IMR-90 (cell line): ENCODE measurements at regions of chr22 and their contacts with region 1.

Region 1: DNA sequence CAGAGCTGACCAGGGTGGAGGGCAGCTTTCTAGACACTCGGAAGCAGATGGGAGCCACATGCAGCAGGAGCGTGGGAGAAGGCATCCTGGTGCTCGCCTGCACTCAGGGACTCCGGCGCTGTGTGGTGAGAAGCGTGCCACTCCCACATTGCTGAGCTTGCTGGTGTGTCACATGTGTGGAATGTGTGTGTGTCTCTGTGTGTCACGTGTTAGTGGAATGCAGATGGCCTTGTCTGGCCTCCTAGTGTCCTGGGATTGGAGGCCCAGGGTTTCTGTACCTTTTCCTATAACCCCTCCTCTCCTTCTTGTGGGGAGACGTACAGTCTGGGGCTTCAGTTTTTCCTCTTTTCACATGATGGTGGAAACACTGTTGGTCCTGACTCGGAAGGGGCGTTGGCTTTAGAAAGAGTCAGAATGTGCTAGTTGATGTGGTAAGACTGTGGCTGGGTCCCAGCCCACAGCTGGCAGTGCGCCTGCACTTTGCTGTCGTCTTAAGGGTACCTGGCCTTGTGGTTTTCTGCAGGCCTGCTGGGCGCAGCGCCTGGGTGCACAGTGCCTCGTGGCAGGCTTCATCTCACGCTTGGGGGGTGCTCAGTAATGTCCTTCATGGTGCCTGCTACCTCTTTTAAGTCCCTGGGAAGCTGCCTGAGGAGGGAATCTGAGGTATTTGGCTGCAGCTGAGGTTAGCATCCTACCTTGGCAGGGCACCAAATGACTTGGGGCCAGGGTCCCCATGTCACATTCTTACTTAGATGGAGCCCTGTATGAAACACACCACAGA is 61.8 kb downstream of the MED15 start:
- DNase-seq: peak; percentile 99
- ATAC-seq: peak; percentile 78
- H3K4me3 ChIP-seq: no peak overlapping the region
- H3K27ac ChIP-seq: peak overlapping the region; percentile 76
- H3K4me1 ChIP-seq: peaks cover 50% of the 10 kb centered on the region
- H3K27me3 ChIP-seq: no peaks in the 10 kb centered on the region
- CTCF ChIP-seq: no peak
- POLR2A ChIP-seq: no peak
- RAD21 ChIP-seq: peak; percentile 15; the same call in 1 of the 2 replicates

Region 2: DNA sequence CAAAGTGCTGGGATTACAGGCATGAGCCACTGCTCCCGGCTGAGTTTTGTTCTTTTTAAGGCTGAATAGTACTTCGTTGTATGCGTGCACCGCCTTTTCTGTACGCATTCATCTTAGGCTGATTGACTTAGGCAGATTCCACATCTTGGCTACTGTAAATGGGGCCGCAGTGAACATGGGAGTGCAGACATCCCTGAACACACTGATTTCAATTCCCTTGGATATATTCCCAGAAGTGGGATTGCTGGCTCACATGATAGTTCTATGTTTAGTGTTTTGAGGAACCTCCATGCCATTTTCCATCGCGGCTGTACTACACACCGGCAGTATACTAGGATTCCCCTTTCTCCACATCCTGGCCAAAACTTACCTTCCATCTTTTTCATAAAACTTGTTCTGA is 185.6 kb before region 1 on chr22:
- CTCF ChIA-PET with region 1: no interaction called
- POLR2A ChIA-PET with region 1: no interaction called
- dilution Hi-C with region 1: no loop called
- in situ Hi-C with region 1: no loop called
- intact Hi-C with region 1: no loop called
- DNase-seq: no peak
- ATAC-seq: no peak
- H3K4me3 ChIP-seq: no peak overlapping the region
- H3K27ac ChIP-seq: no peak overlapping the region
- H3K4me1 ChIP-seq: no peaks in the 10 kb centered on the region
- H3K27me3 ChIP-seq: peaks cover 12% of the 10 kb centered on the region
- CTCF ChIP-seq: no peak
- POLR2A ChIP-seq: no peak
- RAD21 ChIP-seq: no peak

Region 3: GRCh38 chr22:20418211-20418788 is 150.9 kb before region 1 on chr22:
- CTCF ChIA-PET with region 1: no interaction called
- POLR2A ChIA-PET with region 1: no interaction called
- dilution Hi-C with region 1: no loop called
- in situ Hi-C with region 1: no loop called
- intact Hi-C with region 1: loop called (anchors 1 kb)
- DNase-seq: peak; percentile 80
- ATAC-seq: peak; percentile 80
- H3K4me3 ChIP-seq: peak overlapping the region; percentile 31; the same call in 1 of the 2 replicates
- H3K27ac ChIP-seq: peak overlapping the region; percentile 22; the same call in 1 of the 2 replicates
- H3K4me1 ChIP-seq: peaks cover 11% of the 10 kb centered on the region; the same call in 1 of the 2 replicates
- H3K27me3 ChIP-seq: no peaks in the 10 kb centered on the region
- CTCF ChIP-seq: peak; percentile 95
- POLR2A ChIP-seq: 0 out of 2 replicates have a peak, but pooled peaks have one; percentile 51
- RAD21 ChIP-seq: peak; percentile 94

Region 4: DNA sequence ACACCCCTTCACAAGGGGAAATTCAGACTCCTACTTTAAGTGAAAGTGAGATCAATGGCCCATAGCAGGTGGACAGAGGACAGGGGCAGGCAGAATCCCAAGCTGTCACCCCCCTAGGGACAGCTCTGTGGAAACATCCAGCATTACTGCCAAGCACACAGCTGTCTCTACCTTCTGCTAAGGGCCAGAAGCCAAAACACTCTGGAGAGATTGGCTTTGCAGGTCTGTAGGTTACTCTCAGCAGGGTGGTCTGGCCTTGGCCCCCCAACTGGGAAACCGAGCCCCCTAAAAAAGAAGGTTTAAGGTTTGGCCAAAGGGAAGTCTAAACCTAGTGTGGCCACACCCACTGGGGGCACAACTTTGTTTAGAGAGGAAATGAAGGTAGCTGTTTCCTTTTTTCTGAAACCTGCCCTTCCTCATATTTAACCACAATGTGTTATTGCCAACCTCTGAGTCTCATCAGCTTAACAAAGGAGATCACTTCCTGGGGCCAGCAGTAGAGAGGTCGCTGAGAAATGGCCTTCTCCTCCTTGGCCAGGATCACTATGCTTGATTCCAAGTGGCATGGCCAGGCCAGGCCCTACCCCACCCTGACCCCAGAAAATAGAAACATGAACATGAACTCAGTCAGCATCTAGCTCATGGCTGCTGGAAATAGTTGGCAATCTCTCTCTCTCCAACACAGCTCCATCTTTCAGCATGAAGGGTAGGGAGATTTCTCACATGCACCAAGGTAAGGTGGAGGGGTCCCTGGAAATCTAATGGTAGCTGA is 105.7 kb before region 1 on chr22:
- CTCF ChIA-PET with region 1: no interaction called
- POLR2A ChIA-PET with region 1: no interaction called
- dilution Hi-C with region 1: no loop called
- in situ Hi-C with region 1: no loop called
- intact Hi-C with region 1: no loop called
- DNase-seq: no peak
- ATAC-seq: no peak
- H3K4me3 ChIP-seq: no peak overlapping the region
- H3K27ac ChIP-seq: no peak overlapping the region
- H3K4me1 ChIP-seq: peaks cover 5% of the 10 kb centered on the region; the same call in 1 of the 2 replicates
- H3K27me3 ChIP-seq: no peaks in the 10 kb centered on the region
- CTCF ChIP-seq: no peak
- POLR2A ChIP-seq: no peak
- RAD21 ChIP-seq: no peak

Region 5: GRCh38 chr22:20507253-20508066 is 61.7 kb before region 1 on chr22 and contains the start of gene MED15:
- CTCF ChIA-PET with region 1: interaction called, 7 read pairs
- POLR2A ChIA-PET with region 1: interaction called, 5 read pairs
- dilution Hi-C with region 1: no loop called
- in situ Hi-C with region 1: no loop called
- intact Hi-C with region 1: loop called (anchors 5 kb)
- DNase-seq: peak; percentile 89
- ATAC-seq: peak; percentile 73
- H3K4me3 ChIP-seq: peak within 1 kb of the TSS; percentile 78
- H3K27ac ChIP-seq: peak within 1 kb of the TSS; percentile 97
- H3K4me1 ChIP-seq: peaks cover 18% of the 10 kb centered on the region
- H3K27me3 ChIP-seq: no peaks in the 10 kb centered on the region
- CTCF ChIP-seq: no peak
- POLR2A ChIP-seq: peak; percentile 95
- RAD21 ChIP-seq: 0 out of 2 replicates have a peak, but pooled peaks have one; percentile 26
- total RNA-seq, gene MED15: 19.0 and 22.8 TPM in 2 replicates

Region 6: DNA sequence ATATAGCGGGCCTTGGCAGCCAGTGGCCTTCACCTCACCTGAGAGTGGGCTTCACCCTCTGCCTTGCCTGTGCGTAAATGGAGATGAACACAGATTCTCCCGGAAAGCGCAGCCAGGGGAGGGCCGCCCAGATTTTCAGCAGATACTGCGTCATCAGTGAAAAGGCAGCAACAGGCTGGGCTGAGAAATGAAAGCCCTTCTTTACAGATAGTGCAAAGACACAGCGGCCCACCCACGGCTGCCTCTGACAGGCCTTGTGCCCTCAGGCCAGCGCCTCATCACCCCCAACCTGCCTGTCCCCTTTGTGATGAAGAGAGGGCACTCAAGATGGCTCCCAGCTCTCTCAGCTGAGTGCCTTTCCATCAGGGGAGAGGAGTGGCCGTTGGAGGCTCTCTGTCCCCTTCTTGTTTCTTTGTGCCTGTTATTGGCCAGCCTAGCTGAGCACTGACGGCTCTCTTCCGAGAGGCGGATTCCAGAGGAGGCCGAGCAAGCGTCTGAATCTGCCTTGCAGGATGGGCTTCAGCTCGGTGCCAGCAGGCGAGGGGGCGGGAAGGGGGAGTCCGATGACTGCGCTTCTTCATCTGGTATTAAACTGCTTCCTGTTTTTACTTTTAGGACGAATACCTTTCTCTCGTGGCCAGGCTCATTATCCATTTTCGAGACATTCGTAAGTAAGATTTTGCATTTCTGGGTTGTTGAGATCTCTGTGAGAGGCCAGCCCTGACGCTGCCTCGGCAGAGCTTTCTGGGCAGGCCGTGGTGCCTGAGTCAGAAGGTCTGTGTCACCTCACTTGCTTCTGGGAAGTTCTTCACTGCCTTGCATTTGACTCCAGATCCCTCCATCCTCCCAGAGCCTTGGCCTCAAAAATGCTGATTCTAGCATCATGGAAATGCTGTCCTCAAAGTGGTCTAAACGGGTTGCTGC is 18.1 kb before region 1 on chr22:
- CTCF ChIA-PET with region 1: interaction called, 16 read pairs
- POLR2A ChIA-PET with region 1: no interaction called
- dilution Hi-C with region 1: no loop called
- in situ Hi-C with region 1: no loop called
- intact Hi-C with region 1: no loop called
- DNase-seq: peak; percentile 78
- ATAC-seq: peak; percentile 33
- H3K4me3 ChIP-seq: no peak overlapping the region
- H3K27ac ChIP-seq: peak overlapping the region; percentile 85
- H3K4me1 ChIP-seq: peaks cover 51% of the 10 kb centered on the region
- H3K27me3 ChIP-seq: no peaks in the 10 kb centered on the region
- CTCF ChIP-seq: no peak
- POLR2A ChIP-seq: no peak
- RAD21 ChIP-seq: no peak

Region 7: DNA sequence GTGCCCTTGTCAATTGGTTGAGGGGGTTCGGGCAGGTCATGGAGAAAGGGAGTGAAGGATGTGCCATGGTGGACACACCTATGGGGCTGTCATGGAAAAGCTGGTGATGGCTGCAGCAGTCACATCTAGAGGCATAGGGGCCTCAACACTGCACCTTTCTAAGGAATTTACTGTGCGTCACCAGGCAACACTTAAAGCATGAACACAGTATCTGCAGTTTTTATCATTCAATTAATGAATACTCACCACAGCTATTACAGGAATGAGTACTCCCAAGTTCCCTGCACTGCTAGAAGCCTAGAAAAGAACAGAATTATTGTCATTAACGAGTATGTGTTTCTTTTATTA is 223.7 kb after region 1 on chr22:
- CTCF ChIA-PET with region 1: no interaction called
- POLR2A ChIA-PET with region 1: no interaction called
- dilution Hi-C with region 1: no loop called
- in situ Hi-C with region 1: no loop called
- intact Hi-C with region 1: no loop called
- DNase-seq: no peak
- ATAC-seq: no peak
- H3K4me3 ChIP-seq: no peak overlapping the region
- H3K27ac ChIP-seq: no peak overlapping the region
- H3K4me1 ChIP-seq: 0 out of 2 replicates have a peak, but pooled peaks cover 2% of the 10 kb centered on the region
- H3K27me3 ChIP-seq: no peaks in the 10 kb centered on the region
- CTCF ChIP-seq: no peak
- POLR2A ChIP-seq: no peak
- RAD21 ChIP-seq: no peak

Region 8: DNA sequence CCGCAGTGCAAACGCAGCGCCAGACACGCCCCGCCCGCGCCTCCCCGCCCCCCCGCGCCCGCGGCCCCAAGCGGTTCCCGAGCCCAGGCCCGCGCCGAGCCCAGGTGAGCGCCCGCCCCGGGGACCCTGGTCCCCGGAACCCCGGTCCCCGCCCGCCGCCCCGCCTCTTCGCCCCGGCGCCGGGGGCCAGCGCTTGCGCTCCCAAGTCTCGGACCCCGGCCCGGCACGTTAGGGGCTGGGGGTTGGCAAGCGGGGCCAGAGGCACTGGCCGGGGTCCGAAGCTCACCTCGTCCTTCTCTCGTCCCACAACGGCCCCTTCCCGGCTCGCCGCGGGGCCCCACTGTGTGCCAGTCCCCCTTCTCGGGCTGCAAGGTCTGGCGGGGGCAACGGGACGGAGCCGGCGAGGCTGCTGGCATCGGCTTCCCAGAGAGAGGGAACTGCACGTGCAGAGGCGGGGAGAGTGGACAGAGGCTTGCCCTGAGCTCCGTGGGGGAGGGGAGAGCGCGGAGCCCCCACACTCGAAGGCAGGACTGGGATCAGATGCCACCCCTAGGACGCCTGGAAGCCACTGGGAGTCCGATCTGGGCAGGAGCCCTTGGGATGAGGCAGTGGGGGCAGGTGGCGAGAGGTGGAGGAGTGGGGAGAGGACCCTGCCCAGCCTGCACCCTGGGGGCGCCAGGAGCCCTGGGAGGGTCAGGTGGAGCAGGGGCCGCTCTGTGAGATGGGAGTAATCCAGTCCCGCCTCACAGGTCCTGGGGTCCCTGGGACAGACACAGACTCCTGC is 396.1 kb after region 1 on chr22:
- CTCF ChIA-PET with region 1: no interaction called
- POLR2A ChIA-PET with region 1: no interaction called
- dilution Hi-C with region 1: no loop called
- in situ Hi-C with region 1: no loop called
- intact Hi-C with region 1: no loop called
- DNase-seq: no peak
- ATAC-seq: no peak; the same call in none of the 2 replicates
- H3K4me3 ChIP-seq: peak overlapping the region; percentile 17; the same call in 1 of the 2 replicates
- H3K27ac ChIP-seq: no peak overlapping the region
- H3K4me1 ChIP-seq: no peaks in the 10 kb centered on the region
- H3K27me3 ChIP-seq: peaks cover 41% of the 10 kb centered on the region
- CTCF ChIP-seq: no peak
- POLR2A ChIP-seq: no peak
- RAD21 ChIP-seq: no peak